ENCODE measurements at regions of chr9 and their contacts with region 1.

Region 1: DNA sequence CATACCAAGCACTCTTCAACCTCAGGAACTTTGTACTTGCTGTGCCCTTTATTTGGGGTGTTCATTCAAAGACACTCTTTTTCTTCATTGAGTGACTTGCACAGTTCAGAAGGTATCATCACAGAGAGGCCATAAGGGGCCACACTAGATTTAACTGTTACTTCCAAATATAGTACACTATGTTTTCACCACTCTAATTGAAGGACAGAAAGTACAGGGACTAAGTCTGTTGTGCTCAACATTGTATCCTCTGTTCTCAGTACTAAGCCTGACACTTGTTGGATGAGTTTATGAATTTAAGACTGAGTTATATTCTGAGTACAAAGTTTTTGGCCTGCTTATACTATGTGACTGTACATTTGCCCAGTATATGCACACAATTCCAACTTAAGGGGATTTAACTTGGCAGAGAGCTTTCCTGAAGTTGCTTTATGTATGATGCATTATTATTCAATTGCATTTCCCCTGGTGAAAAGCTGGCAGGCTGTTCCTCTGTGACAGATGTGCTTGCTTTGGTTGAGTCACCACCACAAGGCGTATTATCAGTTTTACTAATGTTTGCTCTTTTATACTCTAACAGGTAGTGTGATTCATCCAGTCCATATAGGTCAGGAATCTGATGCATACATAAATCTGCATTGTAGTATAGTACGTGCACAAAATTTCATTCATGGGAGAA is 714.8 kb downstream of the TLR4 start:
- DNase-seq: no peak
- ATAC-seq: peak in 1 of 4 donors; percentile 28
- H3K4me3 ChIP-seq: no peak overlapping the region
- H3K27ac ChIP-seq: no peak overlapping the region
- H3K4me1 ChIP-seq: no peaks in the 10 kb centered on the region
- H3K27me3 ChIP-seq: no peaks in the 10 kb centered on the region
- CTCF ChIP-seq: no peak
- POLR2A ChIP-seq: no peak

Region 2: GRCh38 chr9:118364266-118365106 is 54.5 kb before region 1 on chr9:
- intact Hi-C with region 1: loop called in 1 of 2 experiments (anchors 10 kb)
- DNase-seq: peak in 1 of 3 donors; percentile 41
- ATAC-seq: no peak
- H3K4me3 ChIP-seq: no peak overlapping the region
- H3K27ac ChIP-seq: no peak overlapping the region
- H3K4me1 ChIP-seq: no peaks in the 10 kb centered on the region
- H3K27me3 ChIP-seq: no peaks in the 10 kb centered on the region
- CTCF ChIP-seq: no peak
- POLR2A ChIP-seq: no peak

Measured in right lobe of liver (tissue), 6 donors.